ENCODE measurements at regions of chr1 and their contacts with region 1.

Region 1: GRCh38 chr1:188043536-188044245 is 1214.9 kb downstream of the PLA2G4A start:
- DNase-seq: peak; percentile 92
- H3K4me3 ChIP-seq: peak overlapping the region in 1 of 3 experiments; percentile 26
- H3K27ac ChIP-seq: peak overlapping the region; percentile 94
- H3K4me1 ChIP-seq: peaks cover 33% of the 10 kb centered on the region
- H3K27me3 ChIP-seq: no peaks in the 10 kb centered on the region
- CTCF ChIP-seq: no peak
- POLR2A ChIP-seq: no peak

Region 2: DNA sequence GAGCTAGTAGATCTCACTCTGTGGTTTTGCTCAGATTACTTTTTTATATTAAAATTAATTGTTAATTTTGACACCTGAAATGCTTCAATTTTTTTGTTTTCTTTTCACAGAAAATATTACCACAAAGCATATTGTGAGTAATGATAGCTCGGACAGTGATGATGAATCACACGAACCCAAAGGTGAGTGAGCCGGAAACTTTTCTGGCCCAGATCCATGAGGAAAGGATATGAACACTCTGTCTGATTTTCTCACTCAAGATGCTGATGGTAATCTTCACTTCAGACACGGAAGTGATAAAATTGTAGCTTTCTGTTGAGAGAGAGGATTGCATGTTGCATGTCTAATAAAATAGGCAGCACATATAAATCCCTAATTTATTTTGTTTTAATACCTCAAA is 1093.1 kb before region 1 on chr1:
- CTCF ChIA-PET with region 1: no interaction called
- POLR2A ChIA-PET with region 1: no interaction called
- dilution Hi-C with region 1: no loop called
- intact Hi-C with region 1: loop called (anchors 1 kb)
- DNase-seq: peak; percentile 89
- H3K4me3 ChIP-seq: no peak overlapping the region
- H3K27ac ChIP-seq: peak overlapping the region; percentile 97
- H3K4me1 ChIP-seq: peaks cover 58% of the 10 kb centered on the region
- H3K27me3 ChIP-seq: no peaks in the 10 kb centered on the region
- CTCF ChIP-seq: no peak
- POLR2A ChIP-seq: no peak

Region 3: GRCh38 chr1:188027613-188028012 is 16.1 kb before region 1 on chr1:
- CTCF ChIA-PET with region 1: interaction called, 9 read pairs
- POLR2A ChIA-PET with region 1: interaction called, 3 read pairs
- dilution Hi-C with region 1: no loop called
- intact Hi-C with region 1: loop called (anchors 1 kb)
- DNase-seq: peak; percentile 94
- H3K4me3 ChIP-seq: no peak overlapping the region
- H3K27ac ChIP-seq: peak overlapping the region; percentile 94
- H3K4me1 ChIP-seq: peaks cover 25% of the 10 kb centered on the region
- H3K27me3 ChIP-seq: no peaks in the 10 kb centered on the region
- CTCF ChIP-seq: no peak
- POLR2A ChIP-seq: peak; percentile 28

Region 4: GRCh38 chr1:188070848-188071247 is 27.2 kb after region 1 on chr1:
- CTCF ChIA-PET with region 1: no interaction called
- POLR2A ChIA-PET with region 1: no interaction called
- dilution Hi-C with region 1: no loop called
- intact Hi-C with region 1: no loop called
- DNase-seq: no peak
- H3K4me3 ChIP-seq: no peak overlapping the region
- H3K27ac ChIP-seq: no peak overlapping the region
- H3K4me1 ChIP-seq: no peaks in the 10 kb centered on the region
- H3K27me3 ChIP-seq: no peaks in the 10 kb centered on the region
- CTCF ChIP-seq: no peak
- POLR2A ChIP-seq: no peak

Region 5: DNA sequence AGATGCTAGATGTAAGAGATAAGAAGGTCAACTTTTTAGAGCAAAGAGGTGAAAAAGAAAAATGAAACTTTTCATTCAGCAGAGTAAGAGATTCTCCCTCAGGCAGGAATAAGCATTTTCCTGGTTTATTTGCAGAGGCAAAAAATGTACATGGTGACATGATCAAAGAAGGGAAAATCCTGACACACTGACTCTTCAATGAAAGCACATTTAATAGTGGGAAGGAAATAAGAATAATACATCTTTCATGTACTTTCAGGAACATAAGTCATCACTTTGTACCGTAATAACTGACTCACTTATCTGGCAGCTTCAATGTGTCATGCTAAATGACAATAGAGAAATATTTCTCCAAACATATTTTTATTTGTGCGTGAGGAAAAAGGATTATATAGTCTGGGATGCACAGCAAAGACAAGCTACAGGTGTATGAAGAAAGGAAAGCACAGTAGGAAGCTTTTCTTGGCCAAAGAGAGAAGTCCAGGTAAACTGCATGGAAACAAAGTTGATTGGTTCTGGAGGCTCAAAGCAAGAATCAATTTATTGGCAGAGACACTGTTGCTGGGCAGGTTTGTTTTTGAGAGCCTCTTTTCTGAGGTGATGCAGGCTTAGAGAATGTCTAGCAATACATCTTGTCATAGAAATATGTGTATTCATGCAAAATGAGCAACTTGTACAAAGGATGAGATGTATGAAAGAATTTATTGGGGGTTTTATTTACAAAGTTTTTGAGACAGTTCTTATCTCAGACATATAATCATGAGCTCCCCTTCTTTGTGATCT is 194.1 kb after region 1 on chr1:
- CTCF ChIA-PET with region 1: no interaction called
- POLR2A ChIA-PET with region 1: no interaction called
- dilution Hi-C with region 1: no loop called
- intact Hi-C with region 1: loop called (anchors 1 kb)
- DNase-seq: peak; percentile 79
- H3K4me3 ChIP-seq: peak overlapping the region in 1 of 3 experiments; percentile 23
- H3K27ac ChIP-seq: peak overlapping the region; percentile 73
- H3K4me1 ChIP-seq: peaks cover 24% of the 10 kb centered on the region
- H3K27me3 ChIP-seq: no peaks in the 10 kb centered on the region
- CTCF ChIP-seq: no peak
- POLR2A ChIP-seq: no peak

Region 6: DNA sequence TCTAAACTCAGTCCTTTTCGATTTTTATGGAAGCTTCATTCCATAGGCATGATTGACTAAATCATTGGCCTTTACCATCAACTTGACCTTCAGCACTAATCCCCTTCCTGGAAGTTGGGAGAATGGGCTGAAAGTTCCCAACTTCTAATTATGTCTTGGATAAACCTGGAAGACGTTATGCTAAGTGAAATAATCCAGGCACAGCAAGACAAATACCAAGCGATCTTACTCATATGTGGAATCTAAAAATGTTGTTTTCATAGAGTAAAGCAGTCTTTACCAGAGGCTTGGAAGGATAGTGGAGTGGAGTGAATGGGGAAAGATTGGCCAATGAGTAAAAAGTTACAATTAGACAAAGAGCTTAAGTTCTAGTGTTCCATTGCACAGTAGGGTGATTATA is 238.2 kb after region 1 on chr1:
- CTCF ChIA-PET with region 1: no interaction called
- POLR2A ChIA-PET with region 1: no interaction called
- dilution Hi-C with region 1: no loop called
- intact Hi-C with region 1: no loop called
- DNase-seq: no peak
- H3K4me3 ChIP-seq: no peak overlapping the region
- H3K27ac ChIP-seq: no peak overlapping the region
- H3K4me1 ChIP-seq: no peaks in the 10 kb centered on the region
- H3K27me3 ChIP-seq: no peaks in the 10 kb centered on the region
- CTCF ChIP-seq: no peak
- POLR2A ChIP-seq: no peak

Region 7: GRCh38 chr1:188706742-188707141 is 663.1 kb after region 1 on chr1:
- CTCF ChIA-PET with region 1: no interaction called
- POLR2A ChIA-PET with region 1: no interaction called
- dilution Hi-C with region 1: no loop called
- intact Hi-C with region 1: loop called (anchors 2 kb)
- DNase-seq: peak; percentile 94
- H3K4me3 ChIP-seq: no peak overlapping the region
- H3K27ac ChIP-seq: peak overlapping the region; percentile 93
- H3K4me1 ChIP-seq: peaks cover 25% of the 10 kb centered on the region
- H3K27me3 ChIP-seq: no peaks in the 10 kb centered on the region
- CTCF ChIP-seq: peak; percentile 20 to 26
- POLR2A ChIP-seq: no peak

Measured in endothelial cell of umbilical vein (primary cell).